CD4-positive, alpha-beta memory T cell (primary cell): ENCODE measurements at regions of chr4 and their contacts with region 1.

Region 1: DNA sequence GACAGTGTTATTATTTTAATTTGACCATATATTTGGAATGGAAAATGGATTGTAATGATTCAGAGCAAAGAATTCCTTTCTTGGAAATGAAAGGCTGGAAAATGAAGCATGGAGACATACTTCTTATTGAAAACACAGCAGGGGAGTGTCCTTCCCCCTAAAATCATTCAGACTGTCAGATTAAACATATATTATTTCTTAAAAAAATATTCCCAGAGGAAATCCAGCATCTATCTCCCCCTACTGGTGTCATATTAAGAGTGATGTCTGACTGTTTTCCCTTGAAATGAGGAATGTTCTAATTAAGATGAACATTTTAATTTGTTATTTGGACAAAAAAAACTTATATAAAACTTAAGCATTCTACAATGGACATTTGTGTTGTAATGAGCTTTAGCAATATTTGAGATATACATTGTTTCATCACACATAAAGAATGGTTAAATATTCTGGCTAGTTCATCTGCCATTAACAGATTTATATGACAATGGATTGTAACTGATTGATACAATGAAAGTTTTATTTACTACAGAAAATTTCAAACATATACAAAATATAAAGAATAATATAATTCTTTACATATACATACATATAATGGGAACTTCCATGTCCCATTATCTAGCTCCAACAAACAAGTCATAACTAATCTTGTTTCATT is 264.6 kb downstream of the SPRY1 start:
- DNase-seq: peak in 2 of 5 donors; percentile 5 to 6
- H3K4me3 ChIP-seq: no peak overlapping the region
- H3K4me3 Mint-ChIP-seq: no peak overlapping the region
- H3K27ac ChIP-seq: no peak overlapping the region
- H3K27ac Mint-ChIP-seq: no peak overlapping the region
- H3K4me1 ChIP-seq: no peaks in the 10 kb centered on the region
- H3K4me1 Mint-ChIP-seq: peaks cover 0 to 4% (median 0%) of the 10 kb centered on the region in 4 donors
- H3K27me3 ChIP-seq: no peaks in the 10 kb centered on the region
- H3K27me3 Mint-ChIP-seq: peaks cover 2 to 4% of the 10 kb centered on the region in 2 donors

Region 2: GRCh38 chr4:122129061-122129460 is 1532.1 kb before region 1 on chr4:
- CTCF ChIA-PET with region 1: no interaction called
- POLR2A ChIA-PET with region 1: no interaction called
- intact Hi-C with region 1: no loop called
- DNase-seq: no peak
- H3K4me3 ChIP-seq: no peak overlapping the region
- H3K4me3 Mint-ChIP-seq: no peak overlapping the region
- H3K27ac ChIP-seq: no peak overlapping the region
- H3K27ac Mint-ChIP-seq: peak overlapping the region in 1 of 7 donors; percentile 70
- H3K4me1 ChIP-seq: peaks cover 21% of the 10 kb centered on the region
- H3K4me1 Mint-ChIP-seq: peaks cover 16 to 34% (median 22%) of the 10 kb centered on the region in 4 donors
- H3K27me3 ChIP-seq: no peaks in the 10 kb centered on the region
- H3K27me3 Mint-ChIP-seq: no peaks in the 10 kb centered on the region

Region 3: GRCh38 chr4:123102897-123103471 is 558.2 kb before region 1 on chr4:
- CTCF ChIA-PET with region 1: no interaction called
- POLR2A ChIA-PET with region 1: no interaction called
- intact Hi-C with region 1: loop called (anchors 2 kb)
- DNase-seq: peak in 4 of 5 donors; percentile 6 to 18 (median 11)
- H3K4me3 ChIP-seq: no peak overlapping the region
- H3K4me3 Mint-ChIP-seq: no peak overlapping the region
- H3K27ac ChIP-seq: no peak overlapping the region
- H3K27ac Mint-ChIP-seq: no peak overlapping the region
- H3K4me1 ChIP-seq: no peaks in the 10 kb centered on the region
- H3K4me1 Mint-ChIP-seq: peaks cover 0 to 3% (median 0%) of the 10 kb centered on the region in 4 donors
- H3K27me3 ChIP-seq: no peaks in the 10 kb centered on the region
- H3K27me3 Mint-ChIP-seq: no peaks in the 10 kb centered on the region

Region 4: DNA sequence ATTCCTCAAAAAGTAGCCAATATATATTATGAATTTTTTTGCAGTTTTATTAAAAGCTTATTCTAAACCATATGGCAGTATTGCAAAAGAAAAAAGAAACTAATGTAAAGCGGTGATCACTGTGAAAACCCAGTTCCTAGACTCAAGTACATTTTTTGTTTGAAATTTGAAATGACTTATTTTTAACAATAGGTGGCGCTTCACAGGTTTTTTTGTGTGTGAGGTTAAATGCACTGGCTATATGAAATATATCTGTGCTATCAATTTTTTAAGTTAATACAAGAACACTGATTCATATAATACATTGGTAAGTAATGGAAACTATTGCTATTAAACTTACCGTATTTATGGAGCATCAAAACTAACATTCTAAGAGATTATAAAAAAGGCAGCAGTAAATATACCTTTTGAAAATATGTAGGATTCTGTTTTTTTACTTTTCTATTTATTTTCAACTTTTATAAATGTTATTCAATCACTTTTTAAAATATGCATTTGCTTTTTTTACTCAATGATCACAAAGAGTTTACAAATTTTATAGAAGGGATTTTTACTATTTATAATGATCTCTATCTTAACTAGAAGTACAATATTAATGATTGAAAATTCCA is 270.3 kb before region 1 on chr4:
- CTCF ChIA-PET with region 1: interaction called, 18 read pairs
- POLR2A ChIA-PET with region 1: no interaction called
- intact Hi-C with region 1: loop called (anchors 1 kb)
- DNase-seq: peak in 4 of 5 donors; percentile 12 to 29 (median 16)
- H3K4me3 ChIP-seq: no peak overlapping the region
- H3K4me3 Mint-ChIP-seq: no peak overlapping the region
- H3K27ac ChIP-seq: no peak overlapping the region
- H3K27ac Mint-ChIP-seq: no peak overlapping the region
- H3K4me1 ChIP-seq: no peaks in the 10 kb centered on the region
- H3K4me1 Mint-ChIP-seq: no peaks in the 10 kb centered on the region
- H3K27me3 ChIP-seq: no peaks in the 10 kb centered on the region
- H3K27me3 Mint-ChIP-seq: peaks cover 4 to 6% of the 10 kb centered on the region in 2 donors

Region 5: GRCh38 chr4:123396307-123397143 is 264.7 kb before region 1 on chr4 and contains the start of gene SPRY1:
- CTCF ChIA-PET with region 1: interaction called, 18 read pairs
- POLR2A ChIA-PET with region 1: no interaction called
- intact Hi-C with region 1: loop called (anchors 1 kb)
- DNase-seq: peak; percentile 63 to 83 (median 74)
- H3K4me3 ChIP-seq: peak within 1 kb of the TSS; percentile 31 to 80
- H3K4me3 Mint-ChIP-seq: peak within 1 kb of the TSS; percentile 82 to 96 (median 89)
- H3K27ac ChIP-seq: peak within 1 kb of the TSS; percentile 22
- H3K27ac Mint-ChIP-seq: peak within 1 kb of the TSS; percentile 21 to 91 (median 81)
- H3K4me1 ChIP-seq: peaks cover 27% of the 10 kb centered on the region
- H3K4me1 Mint-ChIP-seq: peaks cover 16 to 34% (median 24%) of the 10 kb centered on the region in 4 donors
- H3K27me3 ChIP-seq: no peaks in the 10 kb centered on the region
- H3K27me3 Mint-ChIP-seq: peaks cover 14 to 15% of the 10 kb centered on the region in 2 donors
- total RNA-seq, gene SPRY1: 4.4 to 4.6 TPM

Region 6: DNA sequence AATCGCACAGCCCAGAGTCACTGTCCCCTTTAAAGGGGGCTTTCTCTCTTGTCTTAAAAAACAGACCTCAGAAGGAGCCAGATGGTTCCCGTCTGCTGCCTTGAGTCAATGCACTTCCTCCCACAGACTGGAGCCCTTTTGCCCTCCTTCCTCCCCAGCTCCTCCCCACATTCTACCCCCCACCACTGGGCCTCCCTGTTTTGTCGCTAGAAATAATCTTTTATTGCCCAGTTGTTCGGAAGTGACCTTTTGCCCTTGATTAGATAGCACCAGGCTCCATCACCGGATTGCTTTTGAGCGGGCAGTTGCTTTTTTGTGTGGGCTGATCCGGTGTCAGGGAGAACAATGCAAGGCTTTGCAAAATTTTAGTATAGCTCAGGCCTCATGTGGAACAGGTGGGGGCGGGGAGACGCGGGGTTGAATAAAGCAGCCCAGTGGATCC is 216.9 kb before region 1 on chr4:
- CTCF ChIA-PET with region 1: no interaction called
- POLR2A ChIA-PET with region 1: no interaction called
- intact Hi-C with region 1: loop called (anchors 1 kb)
- DNase-seq: peak in 1 of 5 donors; percentile 11
- H3K4me3 ChIP-seq: no peak overlapping the region
- H3K4me3 Mint-ChIP-seq: peak overlapping the region; percentile 31 to 78 (median 58)
- H3K27ac ChIP-seq: no peak overlapping the region
- H3K27ac Mint-ChIP-seq: peak overlapping the region in 4 of 7 donors; percentile 59 to 77 (median 72)
- H3K4me1 ChIP-seq: peaks cover 8% of the 10 kb centered on the region
- H3K4me1 Mint-ChIP-seq: peaks cover 8 to 13% (median 11%) of the 10 kb centered on the region in 4 donors
- H3K27me3 ChIP-seq: no peaks in the 10 kb centered on the region
- H3K27me3 Mint-ChIP-seq: peaks cover 2 to 5% of the 10 kb centered on the region in 2 donors

Region 7: DNA sequence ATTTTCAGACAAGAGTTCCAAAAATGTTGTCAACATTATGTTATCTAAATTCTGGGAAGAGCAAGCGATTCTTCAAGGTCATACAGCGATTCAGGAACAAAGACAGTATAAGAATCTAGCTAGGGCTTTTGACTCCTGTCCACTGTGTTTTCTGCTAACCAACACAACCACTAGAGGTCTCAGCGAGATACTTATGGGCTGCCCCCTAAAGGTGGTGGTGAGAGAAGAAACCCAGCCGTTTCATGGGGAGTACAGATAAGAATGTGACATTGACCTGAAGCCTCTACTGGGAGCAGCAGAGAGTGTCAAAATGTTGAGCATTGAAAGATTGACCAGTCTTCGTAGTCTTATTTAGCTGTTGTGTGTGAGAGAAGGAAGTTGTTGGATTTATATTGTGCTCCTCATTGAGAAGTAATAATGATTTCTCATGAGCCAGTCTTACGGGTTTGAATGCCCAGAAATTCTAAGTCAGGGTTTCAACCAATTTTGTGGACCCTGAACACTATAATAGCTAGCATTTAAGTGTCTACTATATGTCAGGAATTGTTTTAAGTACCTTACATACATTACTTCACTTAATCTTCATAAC is 96.4 kb before region 1 on chr4:
- CTCF ChIA-PET with region 1: interaction called, 37 read pairs
- POLR2A ChIA-PET with region 1: no interaction called
- intact Hi-C with region 1: loop called (anchors 1 kb)
- DNase-seq: peak in 4 of 5 donors; percentile 42 to 50 (median 45)
- H3K4me3 ChIP-seq: no peak overlapping the region
- H3K4me3 Mint-ChIP-seq: no peak overlapping the region
- H3K27ac ChIP-seq: no peak overlapping the region
- H3K27ac Mint-ChIP-seq: no peak overlapping the region
- H3K4me1 ChIP-seq: no peaks in the 10 kb centered on the region
- H3K4me1 Mint-ChIP-seq: peaks cover 0 to 4% (median 1%) of the 10 kb centered on the region in 4 donors
- H3K27me3 ChIP-seq: no peaks in the 10 kb centered on the region
- H3K27me3 Mint-ChIP-seq: peaks cover 0 to 4% of the 10 kb centered on the region in 2 donors